ENCODE measurements at regions of chr5 and their contacts with region 1.

Region 1: GRCh38 chr5:143002459-143003328 is 232.5 kb downstream of the ARHGAP26 start:
- DNase-seq: peak; percentile 66
- H3K4me3 Mint-ChIP-seq: peak overlapping the region; percentile 75
- H3K27ac Mint-ChIP-seq: peak overlapping the region; percentile 98
- H3K4me1 Mint-ChIP-seq: peaks cover 89% of the 10 kb centered on the region
- H3K27me3 Mint-ChIP-seq: no peaks in the 10 kb centered on the region

Region 2: GRCh38 chr5:142977363-142978051 is 25.2 kb before region 1 on chr5:
- intact Hi-C with region 1: loop called (anchors 2 kb)
- DNase-seq: peak; percentile 55
- H3K4me3 Mint-ChIP-seq: peak overlapping the region; percentile 76
- H3K27ac Mint-ChIP-seq: peak overlapping the region; percentile 92
- H3K4me1 Mint-ChIP-seq: peaks cover 93% of the 10 kb centered on the region
- H3K27me3 Mint-ChIP-seq: no peaks in the 10 kb centered on the region

Region 3: DNA sequence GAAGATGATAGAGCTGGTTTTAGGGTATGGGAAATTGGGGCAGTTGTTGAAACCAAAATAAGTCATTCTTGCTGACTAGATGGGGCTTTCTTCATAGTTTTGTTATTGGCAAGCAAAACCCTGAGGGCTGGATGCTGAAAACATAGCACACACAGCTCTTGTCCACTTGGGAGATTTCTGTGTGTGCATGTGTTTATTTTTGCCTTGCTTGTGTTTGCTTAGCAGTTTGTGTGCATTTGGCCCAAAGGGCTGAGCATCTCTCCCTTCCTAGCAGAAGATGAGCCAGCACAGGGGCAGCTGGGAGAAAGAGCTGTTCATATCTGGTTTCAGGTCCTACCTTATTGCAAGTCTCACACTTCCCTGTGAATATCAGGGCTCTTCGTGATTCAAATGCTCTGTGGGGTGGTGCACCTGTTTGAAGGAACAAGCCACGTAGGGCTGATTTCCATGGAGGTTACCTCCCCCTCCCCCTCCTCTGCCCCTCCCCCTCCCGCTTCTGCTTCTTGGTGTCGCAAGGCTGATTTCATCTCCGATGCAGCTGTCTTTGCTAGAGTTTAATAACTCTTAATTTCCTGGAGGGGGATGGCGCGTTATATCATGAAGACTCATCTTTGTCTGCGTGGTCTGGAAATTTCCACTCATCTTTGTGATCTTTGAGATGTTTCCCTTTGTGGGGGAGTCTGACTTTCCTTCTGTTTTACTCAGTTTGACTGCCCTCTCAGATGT is 64.0 kb after region 1 on chr5:
- intact Hi-C with region 1: loop called (anchors 2 kb)
- DNase-seq: no peak
- H3K4me3 Mint-ChIP-seq: peak overlapping the region; percentile 38
- H3K27ac Mint-ChIP-seq: peak overlapping the region; percentile 78
- H3K4me1 Mint-ChIP-seq: peaks cover 55% of the 10 kb centered on the region
- H3K27me3 Mint-ChIP-seq: no peaks in the 10 kb centered on the region

Region 4: DNA sequence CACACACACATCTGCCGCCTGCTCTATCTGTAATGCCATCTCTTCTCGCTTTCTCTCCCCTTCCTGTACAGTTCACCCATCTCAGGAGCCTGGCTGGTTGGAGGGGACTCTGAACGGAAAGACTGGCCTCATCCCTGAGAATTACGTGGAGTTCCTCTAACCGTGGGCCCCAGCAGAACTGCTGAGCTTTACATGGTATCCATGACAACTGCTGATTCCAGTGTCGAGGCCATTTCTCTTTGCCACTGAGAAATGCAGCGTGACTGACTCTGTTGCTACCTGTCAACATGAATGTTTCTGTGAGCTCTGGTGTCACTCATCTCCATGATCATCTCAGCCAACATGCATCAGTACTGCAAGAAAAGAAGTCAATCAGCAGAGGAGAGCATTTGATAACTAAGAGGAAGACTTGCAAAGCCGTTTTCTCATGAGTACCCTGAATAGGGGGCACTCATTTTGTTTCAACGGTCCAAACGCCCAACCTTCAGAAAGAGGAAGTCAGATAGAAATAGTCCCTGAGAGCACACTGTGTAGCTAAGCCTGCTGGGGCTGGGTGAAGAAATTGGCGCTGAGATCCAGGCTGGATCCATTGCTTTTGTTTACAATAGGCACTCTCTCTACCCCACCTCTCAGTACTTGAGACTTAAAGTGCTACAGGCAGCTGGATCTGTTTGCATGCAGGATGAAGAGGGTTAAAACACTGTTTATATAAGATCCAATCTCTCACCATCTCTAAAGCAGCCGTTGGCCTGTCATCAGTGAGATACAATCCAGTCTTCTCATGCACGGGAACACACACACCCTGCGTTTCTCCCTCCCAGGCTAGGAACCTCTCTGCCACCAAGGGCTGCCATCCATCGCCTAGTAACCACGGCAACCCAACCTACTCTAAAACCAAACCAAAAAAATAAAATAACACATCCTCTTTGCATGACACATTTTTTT is 219.9 kb after region 1 on chr5:
- intact Hi-C with region 1: loop called (anchors 1 kb)
- DNase-seq: peak; percentile 59
- H3K4me3 Mint-ChIP-seq: peak overlapping the region; percentile 60
- H3K27ac Mint-ChIP-seq: peak overlapping the region; percentile 92
- H3K4me1 Mint-ChIP-seq: peaks cover 77% of the 10 kb centered on the region
- H3K27me3 Mint-ChIP-seq: no peaks in the 10 kb centered on the region

Region 5: DNA sequence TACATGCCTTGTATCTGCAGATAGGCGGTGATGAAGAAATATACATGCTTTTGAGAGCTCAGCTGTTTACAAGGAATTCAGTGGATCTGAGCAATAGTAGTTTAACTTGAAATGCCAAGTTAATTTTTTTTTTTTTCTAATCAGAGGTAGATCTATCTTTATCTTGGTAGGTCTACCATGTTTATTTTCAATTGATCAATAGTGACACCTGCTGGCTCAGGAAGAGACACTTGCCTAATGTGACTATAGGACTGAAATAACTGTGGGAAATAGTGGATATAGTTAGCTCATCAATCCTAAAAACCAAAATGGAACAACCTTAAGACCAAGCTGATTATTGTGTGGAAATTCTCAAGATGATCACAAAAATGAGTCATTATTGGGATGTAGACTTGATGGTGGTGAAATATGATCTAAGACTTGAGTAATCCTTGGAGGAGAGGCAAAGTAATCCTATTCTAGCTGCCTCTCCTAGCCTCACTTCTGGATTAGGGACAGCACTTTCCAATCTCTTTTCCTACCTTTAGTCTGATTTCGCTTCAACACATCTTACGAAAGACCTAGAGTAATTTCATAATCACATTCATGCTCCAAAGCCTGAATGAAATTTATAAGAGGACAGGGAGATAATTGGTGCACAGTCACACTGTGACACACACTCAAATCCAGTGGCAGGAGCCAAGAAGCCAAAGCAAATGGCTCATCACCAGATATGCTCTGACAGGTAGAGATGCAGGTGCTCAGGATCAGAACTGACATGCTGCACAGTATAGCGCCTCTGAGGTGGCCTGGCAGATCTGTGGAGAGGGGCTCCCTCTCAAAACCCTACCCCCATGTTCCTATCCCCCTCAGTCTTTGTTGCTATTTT is 965.6 kb after region 1 on chr5:
- intact Hi-C with region 1: loop called (anchors 5 kb)
- DNase-seq: no peak
- H3K4me3 Mint-ChIP-seq: no peak overlapping the region
- H3K27ac Mint-ChIP-seq: no peak overlapping the region
- H3K4me1 Mint-ChIP-seq: no peaks in the 10 kb centered on the region
- H3K27me3 Mint-ChIP-seq: peaks cover 17% of the 10 kb centered on the region

Region 6: GRCh38 chr5:144170276-144171024 is 1167.8 kb after region 1 on chr5 and contains the starts of genes KCTD16 and YIPF5:
- intact Hi-C with region 1: loop called (anchors 5 kb)
- DNase-seq: peak; percentile 98
- H3K4me3 Mint-ChIP-seq: peak within 1 kb of the TSS; percentile 96
- H3K27ac Mint-ChIP-seq: peak within 1 kb of the TSS; percentile 80
- H3K4me1 Mint-ChIP-seq: peaks cover 45% of the 10 kb centered on the region
- H3K27me3 Mint-ChIP-seq: peaks cover 13% of the 10 kb centered on the region
- total RNA-seq, gene KCTD16: not detected in 2 replicates
- total RNA-seq, gene YIPF5: 34.2 and 37.9 TPM in 2 replicates